CD4-positive, alpha-beta memory T cell (primary cell): ENCODE measurements at regions of chr10 and their contacts with region 1.

Region 1: DNA sequence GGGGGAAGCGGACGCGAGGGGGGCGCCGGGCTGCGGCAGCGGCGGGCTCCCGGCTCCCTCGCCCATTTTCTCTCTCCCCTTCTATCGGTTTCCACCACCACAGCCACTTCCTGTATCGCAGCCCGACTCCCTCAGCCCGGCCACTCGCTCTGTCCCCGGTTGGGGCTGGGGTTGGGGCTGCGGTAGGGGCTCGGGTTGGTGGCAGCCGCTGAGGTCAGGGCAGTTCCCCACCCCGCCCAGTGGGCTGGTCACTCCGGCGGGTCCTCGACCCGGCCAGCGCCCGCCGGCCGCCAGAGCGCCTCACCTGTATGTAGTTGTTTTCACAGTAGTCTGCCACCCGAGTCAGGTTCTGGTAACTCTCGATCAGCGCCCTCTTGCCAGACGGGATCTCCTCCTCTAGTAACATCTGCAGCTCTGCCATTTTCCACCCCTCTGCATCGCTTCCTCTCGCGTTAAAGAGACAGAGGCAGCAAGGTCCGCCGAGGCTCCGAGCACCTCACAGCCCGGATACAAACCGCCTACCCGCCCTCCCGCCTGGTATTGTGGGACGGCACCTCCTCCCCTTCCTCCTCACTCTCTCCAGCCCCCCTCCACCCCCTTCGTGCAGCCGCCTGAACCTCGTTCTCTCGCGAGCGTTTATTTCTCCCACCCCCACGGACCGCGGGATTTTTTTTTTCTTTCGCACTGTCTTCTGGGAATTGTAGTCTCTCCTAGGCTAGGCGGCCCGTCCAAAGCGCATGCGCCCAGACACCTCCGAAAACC is at the start of gene ABI1:
- DNase-seq: peak; percentile 99
- H3K4me3 ChIP-seq: peak within 1 kb of the TSS; percentile 87 to 100
- H3K4me3 Mint-ChIP-seq: peak within 1 kb of the TSS; percentile 95 to 100 (median 98)
- H3K27ac ChIP-seq: peak within 1 kb of the TSS; percentile 97
- H3K27ac Mint-ChIP-seq: peak within 1 kb of the TSS; percentile 96 to 100 (median 98)
- H3K4me1 ChIP-seq: peaks cover 45% of the 10 kb centered on the region
- H3K4me1 Mint-ChIP-seq: peaks cover 21 to 51% (median 35%) of the 10 kb centered on the region in 4 donors
- H3K27me3 ChIP-seq: peaks cover 4% of the 10 kb centered on the region
- H3K27me3 Mint-ChIP-seq: peaks cover 3% of the 10 kb centered on the region in 2 donors
- total RNA-seq, gene ABI1: 62.2 to 62.5 TPM

Region 2: DNA sequence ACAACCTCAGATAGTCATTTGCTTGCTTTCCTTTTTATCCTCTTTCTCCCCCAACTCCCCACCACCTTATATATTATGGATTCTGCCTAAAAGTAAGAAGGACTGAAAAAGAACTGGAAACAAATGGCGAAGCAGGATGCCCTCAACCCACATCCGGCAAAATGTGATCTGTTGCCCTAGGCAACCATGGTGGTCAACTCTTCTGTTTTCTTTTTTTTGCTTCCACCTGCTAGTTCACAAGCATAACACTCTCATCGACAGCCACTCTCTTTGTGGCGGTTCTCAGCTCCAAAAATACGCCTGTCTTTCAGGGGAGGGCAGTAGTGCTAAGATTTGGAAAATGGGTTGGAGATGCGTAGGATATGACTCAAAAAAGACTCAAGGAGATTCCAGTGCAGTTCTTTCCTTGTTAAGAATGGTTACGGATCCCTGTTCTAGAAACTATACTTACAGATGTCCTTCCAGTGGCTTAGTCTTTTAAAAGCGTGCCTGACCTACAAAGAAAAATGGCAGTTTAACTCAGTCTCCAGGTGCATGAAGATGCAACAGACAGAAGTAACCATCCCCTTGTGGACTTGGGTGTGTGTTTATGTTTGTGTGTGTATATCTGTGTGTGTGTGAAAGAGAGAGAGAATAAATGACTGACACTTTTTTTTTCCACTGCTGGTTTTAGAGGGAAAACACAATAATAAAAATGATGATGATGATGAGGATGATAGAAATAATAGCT is 411.8 kb before region 1 on chr10:
- CTCF ChIA-PET with region 1: no interaction called
- POLR2A ChIA-PET with region 1: no interaction called
- intact Hi-C with region 1: loop called (anchors 5 kb)
- DNase-seq: peak; percentile 87 to 91 (median 89)
- H3K4me3 ChIP-seq: peak overlapping the region; percentile 31 to 37
- H3K4me3 Mint-ChIP-seq: peak overlapping the region; percentile 76 to 89 (median 84)
- H3K27ac ChIP-seq: peak overlapping the region; percentile 68
- H3K27ac Mint-ChIP-seq: peak overlapping the region; percentile 92 to 99 (median 98)
- H3K4me1 ChIP-seq: peaks cover 95% of the 10 kb centered on the region
- H3K4me1 Mint-ChIP-seq: peaks cover 77 to 93% (median 85%) of the 10 kb centered on the region in 4 donors
- H3K27me3 ChIP-seq: no peaks in the 10 kb centered on the region
- H3K27me3 Mint-ChIP-seq: no peaks in the 10 kb centered on the region

Region 3: DNA sequence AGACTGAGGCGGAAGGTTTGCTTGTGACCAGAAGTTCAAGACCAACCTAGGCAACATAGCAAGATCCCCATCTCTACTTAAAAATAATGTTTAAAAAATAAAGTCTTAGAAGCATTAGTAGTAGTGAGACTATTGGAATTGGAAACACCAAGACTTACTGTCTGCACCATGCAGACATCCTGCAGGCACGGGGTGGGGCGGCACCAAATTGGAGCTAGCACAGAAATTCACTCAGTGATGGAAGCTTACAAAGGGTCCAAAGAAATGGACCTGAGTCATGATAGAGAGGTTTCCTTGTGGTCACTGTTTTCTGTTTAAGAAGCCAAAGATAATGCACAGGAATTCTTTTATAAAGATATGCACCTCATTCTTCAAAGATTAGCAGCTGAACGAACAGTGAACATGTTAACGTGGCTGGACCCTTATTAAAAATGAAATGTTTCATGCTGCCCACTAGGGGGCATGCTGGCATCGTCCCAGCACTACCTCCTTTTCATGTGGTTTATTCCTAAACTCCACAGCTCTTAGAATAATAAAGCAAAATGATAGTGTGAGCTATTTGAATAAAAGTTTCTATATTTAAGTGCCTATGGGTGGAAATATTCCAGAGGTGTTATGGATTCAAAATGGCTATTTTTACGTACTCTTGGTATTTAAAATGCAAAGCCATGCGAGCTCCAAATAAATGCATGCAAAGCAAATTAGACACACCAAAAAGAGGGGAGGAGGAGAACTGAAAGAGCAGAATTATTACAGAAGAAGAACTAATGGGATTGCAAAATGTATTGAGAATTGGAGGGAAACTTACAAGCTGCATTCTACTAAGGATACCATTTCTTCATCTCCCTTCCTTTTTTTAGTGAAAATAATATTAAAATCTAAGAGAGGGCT is 134.5 kb before region 1 on chr10:
- CTCF ChIA-PET with region 1: interaction called, 21 read pairs
- POLR2A ChIA-PET with region 1: interaction called, 3 read pairs
- intact Hi-C with region 1: loop called (anchors 1 kb)
- DNase-seq: peak in 4 of 5 donors; percentile 48 to 53 (median 50)
- H3K4me3 ChIP-seq: no peak overlapping the region
- H3K4me3 Mint-ChIP-seq: no peak overlapping the region
- H3K27ac ChIP-seq: no peak overlapping the region
- H3K27ac Mint-ChIP-seq: peak overlapping the region in 2 of 7 donors; percentile 2 to 23
- H3K4me1 ChIP-seq: peaks cover 11% of the 10 kb centered on the region
- H3K4me1 Mint-ChIP-seq: peaks cover 8 to 14% (median 11%) of the 10 kb centered on the region in 4 donors
- H3K27me3 ChIP-seq: no peaks in the 10 kb centered on the region
- H3K27me3 Mint-ChIP-seq: no peaks in the 10 kb centered on the region

Region 4: DNA sequence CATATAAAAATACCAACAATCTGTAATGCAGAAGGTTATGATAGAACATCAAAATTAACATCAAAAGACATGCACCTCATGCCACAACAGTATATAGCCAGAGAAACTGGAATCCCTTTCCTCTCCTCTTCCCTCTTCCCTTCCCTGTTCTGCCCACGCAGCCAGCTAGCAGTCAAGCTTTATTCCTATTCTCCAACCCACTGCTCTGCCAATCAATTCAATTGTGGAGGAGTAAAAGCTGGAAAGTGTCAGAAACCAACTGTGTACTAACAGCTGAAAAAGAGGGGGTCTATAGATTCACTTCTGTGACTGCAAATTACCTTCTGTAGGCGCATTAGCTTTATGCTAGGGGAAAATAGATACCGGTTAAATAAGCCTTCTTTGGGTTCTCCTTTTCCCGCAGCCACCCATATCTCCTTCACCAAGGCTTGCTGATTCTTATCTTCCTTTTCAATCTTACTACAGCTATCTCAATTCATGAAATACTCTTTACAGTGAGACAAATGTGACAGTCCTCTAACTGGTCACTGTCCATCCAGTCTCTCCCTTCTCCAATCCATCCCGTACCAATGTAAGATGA is 16.1 kb before region 1 on chr10:
- CTCF ChIA-PET with region 1: no interaction called
- POLR2A ChIA-PET with region 1: interaction called, 3 read pairs
- intact Hi-C with region 1: loop called (anchors 2 kb)
- DNase-seq: no peak
- H3K4me3 ChIP-seq: no peak overlapping the region
- H3K4me3 Mint-ChIP-seq: peak overlapping the region in 5 of 8 donors; percentile 1 to 57 (median 13)
- H3K27ac ChIP-seq: no peak overlapping the region
- H3K27ac Mint-ChIP-seq: peak overlapping the region in 5 of 7 donors; percentile 1 to 74 (median 23)
- H3K4me1 ChIP-seq: peaks cover 81% of the 10 kb centered on the region
- H3K4me1 Mint-ChIP-seq: peaks cover 52 to 76% (median 60%) of the 10 kb centered on the region in 4 donors
- H3K27me3 ChIP-seq: no peaks in the 10 kb centered on the region
- H3K27me3 Mint-ChIP-seq: no peaks in the 10 kb centered on the region

Region 5: DNA sequence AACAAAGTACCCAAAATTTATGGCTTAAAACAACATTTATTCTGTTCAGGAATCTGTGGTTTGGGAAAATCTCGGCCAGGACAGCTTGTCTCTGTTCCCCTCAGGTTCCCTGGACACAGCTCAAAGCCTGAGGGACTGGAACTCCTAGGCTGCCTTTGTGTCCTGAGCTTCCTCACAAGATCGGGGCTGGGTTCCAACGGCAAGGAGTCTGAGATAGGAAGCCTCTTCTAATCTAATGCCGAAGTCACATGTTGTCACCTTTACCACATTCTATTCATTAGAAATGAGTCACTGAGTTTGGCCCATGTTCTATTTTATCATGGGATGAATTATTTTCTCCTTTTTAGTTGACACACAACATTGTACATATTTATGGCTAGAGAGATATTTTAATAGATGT is 159.2 kb after region 1 on chr10:
- CTCF ChIA-PET with region 1: no interaction called
- POLR2A ChIA-PET with region 1: no interaction called
- intact Hi-C with region 1: no loop called
- DNase-seq: no peak
- H3K4me3 ChIP-seq: no peak overlapping the region
- H3K4me3 Mint-ChIP-seq: no peak overlapping the region
- H3K27ac ChIP-seq: no peak overlapping the region
- H3K27ac Mint-ChIP-seq: no peak overlapping the region
- H3K4me1 ChIP-seq: peaks cover 12% of the 10 kb centered on the region
- H3K4me1 Mint-ChIP-seq: peaks cover 8 to 20% (median 16%) of the 10 kb centered on the region in 4 donors
- H3K27me3 ChIP-seq: no peaks in the 10 kb centered on the region
- H3K27me3 Mint-ChIP-seq: no peaks in the 10 kb centered on the region

Region 6: GRCh38 chr10:27099916-27100812 is 239.5 kb after region 1 on chr10 and contains the start of gene ANKRD26:
- CTCF ChIA-PET with region 1: no interaction called
- POLR2A ChIA-PET with region 1: no interaction called
- intact Hi-C with region 1: loop called (anchors 1 kb)
- DNase-seq: peak; percentile 95 to 96 (median 95)
- H3K4me3 ChIP-seq: peak within 1 kb of the TSS; percentile 58 to 67
- H3K4me3 Mint-ChIP-seq: peak within 1 kb of the TSS; percentile 92 to 99 (median 96)
- H3K27ac ChIP-seq: peak within 1 kb of the TSS; percentile 76
- H3K27ac Mint-ChIP-seq: peak within 1 kb of the TSS; percentile 94 to 99 (median 98)
- H3K4me1 ChIP-seq: peaks cover 33% of the 10 kb centered on the region
- H3K4me1 Mint-ChIP-seq: peaks cover 21 to 49% (median 37%) of the 10 kb centered on the region in 4 donors
- H3K27me3 ChIP-seq: no peaks in the 10 kb centered on the region
- H3K27me3 Mint-ChIP-seq: no peaks in the 10 kb centered on the region
- total RNA-seq, gene ANKRD26: 10.7 to 11.6 TPM

Region 7: GRCh38 chr10:27504007-27504807 is 643.6 kb after region 1 on chr10 and contains the start of gene RAB18:
- CTCF ChIA-PET with region 1: no interaction called
- POLR2A ChIA-PET with region 1: interaction called, 7 read pairs
- intact Hi-C with region 1: loop called (anchors 1 kb)
- DNase-seq: peak; percentile 97 to 99 (median 99)
- H3K4me3 ChIP-seq: peak within 1 kb of the TSS; percentile 59 to 74
- H3K4me3 Mint-ChIP-seq: peak within 1 kb of the TSS; percentile 96 to 100 (median 99)
- H3K27ac ChIP-seq: peak within 1 kb of the TSS; percentile 90
- H3K27ac Mint-ChIP-seq: peak within 1 kb of the TSS; percentile 96 to 100 (median 99)
- H3K4me1 ChIP-seq: peaks cover 42% of the 10 kb centered on the region
- H3K4me1 Mint-ChIP-seq: peaks cover 44 to 56% (median 51%) of the 10 kb centered on the region in 4 donors
- H3K27me3 ChIP-seq: no peaks in the 10 kb centered on the region
- H3K27me3 Mint-ChIP-seq: no peaks in the 10 kb centered on the region
- total RNA-seq, gene RAB18: 83.3 to 88.5 TPM

Region 8: GRCh38 chr10:28367929-28368484 is 1507.4 kb after region 1 on chr10:
- CTCF ChIA-PET with region 1: no interaction called
- POLR2A ChIA-PET with region 1: no interaction called
- intact Hi-C with region 1: loop called (anchors 2 kb)
- DNase-seq: peak; percentile 74 to 86 (median 80)
- H3K4me3 ChIP-seq: no peak overlapping the region
- H3K4me3 Mint-ChIP-seq: peak overlapping the region; percentile 41 to 87 (median 80)
- H3K27ac ChIP-seq: peak overlapping the region; percentile 65
- H3K27ac Mint-ChIP-seq: peak overlapping the region; percentile 85 to 98 (median 97)
- H3K4me1 ChIP-seq: peaks cover 58% of the 10 kb centered on the region
- H3K4me1 Mint-ChIP-seq: peaks cover 33 to 61% (median 49%) of the 10 kb centered on the region in 4 donors
- H3K27me3 ChIP-seq: no peaks in the 10 kb centered on the region
- H3K27me3 Mint-ChIP-seq: no peaks in the 10 kb centered on the region